Right cardiac atrium (tissue), 5 donors: ENCODE measurements at regions of chr5 and their contacts with region 1.

Region 1: DNA sequence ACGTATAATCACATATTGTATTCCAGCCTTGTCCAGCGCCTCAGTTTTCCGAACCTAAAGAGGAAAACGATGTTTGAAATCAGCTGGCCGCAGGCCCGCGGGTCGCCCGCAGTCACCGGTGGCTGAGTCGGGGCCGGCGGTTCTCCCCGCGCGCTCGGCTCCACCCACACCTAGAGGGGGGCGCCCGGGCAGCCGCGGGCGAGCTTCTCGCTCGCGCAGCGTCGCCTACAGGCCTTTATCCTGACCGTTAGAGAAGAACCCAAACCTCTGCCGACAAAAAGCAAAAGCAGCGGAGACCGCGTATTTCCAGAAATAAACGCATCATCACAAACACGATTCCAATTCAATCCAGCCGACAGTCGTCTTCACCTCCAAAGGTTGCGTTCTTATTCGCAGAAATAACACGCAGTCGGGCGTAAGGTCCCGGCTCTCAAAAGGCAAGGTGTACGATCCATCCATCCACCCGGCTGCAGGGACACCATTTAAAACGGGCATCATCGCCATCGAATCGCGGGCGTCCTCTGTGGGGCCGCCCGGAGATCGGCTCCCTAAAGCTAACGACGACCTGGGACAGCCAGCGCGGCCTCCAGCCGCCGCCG is 680 bp upstream of the NIPBL start:
- DNase-seq: peak; percentile 83 to 93 (median 92)
- ATAC-seq: peak; percentile 92
- H3K4me3 ChIP-seq: peak overlapping the region; percentile 96
- H3K27ac ChIP-seq: peak overlapping the region; percentile 92
- H3K4me1 ChIP-seq: no peaks in the 10 kb centered on the region
- H3K27me3 ChIP-seq: no peaks in the 10 kb centered on the region

Region 2: DNA sequence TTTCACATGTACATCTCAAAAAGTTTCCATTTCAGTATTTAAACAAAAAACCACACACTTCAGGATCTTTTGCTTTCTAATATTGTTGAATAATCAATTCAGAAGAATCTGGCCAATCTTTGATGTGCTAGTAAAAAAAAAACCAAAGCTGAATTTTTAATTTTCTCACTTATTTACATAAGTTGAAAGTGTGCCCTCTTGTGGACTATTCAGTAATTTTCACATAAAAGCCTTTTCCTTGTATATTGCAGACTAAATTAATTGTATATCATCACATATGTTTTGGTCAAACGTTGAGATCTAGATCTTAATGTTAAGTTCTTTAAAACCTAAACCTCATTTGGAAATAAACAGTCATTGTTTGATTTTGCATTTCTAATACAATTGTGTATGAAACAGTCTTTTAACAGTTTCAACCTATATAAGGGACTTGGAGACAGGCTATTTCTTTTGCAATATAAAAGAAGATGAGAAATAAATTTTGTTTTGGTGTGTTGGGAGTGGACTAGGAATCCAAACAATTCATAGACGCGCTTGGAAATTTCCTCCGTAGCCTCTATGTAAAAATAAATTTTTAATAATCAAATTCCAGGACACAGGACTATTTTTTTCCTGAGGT is 68.8 kb after region 1 on chr5:
- intact Hi-C with region 1: loop called in 3 of 4 experiments (anchors 10 kb)
- DNase-seq: no peak
- ATAC-seq: no peak
- H3K4me3 ChIP-seq: no peak overlapping the region
- H3K27ac ChIP-seq: no peak overlapping the region
- H3K4me1 ChIP-seq: peaks cover 1% of the 10 kb centered on the region
- H3K27me3 ChIP-seq: no peaks in the 10 kb centered on the region

Region 3: GRCh38 chr5:37054391-37054790 is 178.5 kb after region 1 on chr5:
- intact Hi-C with region 1: no loop called
- DNase-seq: no peak
- ATAC-seq: no peak
- H3K4me3 ChIP-seq: no peak overlapping the region
- H3K27ac ChIP-seq: no peak overlapping the region
- H3K4me1 ChIP-seq: no peaks in the 10 kb centered on the region
- H3K27me3 ChIP-seq: no peaks in the 10 kb centered on the region